Right cardiac atrium (tissue), 5 donors: ENCODE measurements at regions of chr1 and their contacts with region 1.

Region 1: DNA sequence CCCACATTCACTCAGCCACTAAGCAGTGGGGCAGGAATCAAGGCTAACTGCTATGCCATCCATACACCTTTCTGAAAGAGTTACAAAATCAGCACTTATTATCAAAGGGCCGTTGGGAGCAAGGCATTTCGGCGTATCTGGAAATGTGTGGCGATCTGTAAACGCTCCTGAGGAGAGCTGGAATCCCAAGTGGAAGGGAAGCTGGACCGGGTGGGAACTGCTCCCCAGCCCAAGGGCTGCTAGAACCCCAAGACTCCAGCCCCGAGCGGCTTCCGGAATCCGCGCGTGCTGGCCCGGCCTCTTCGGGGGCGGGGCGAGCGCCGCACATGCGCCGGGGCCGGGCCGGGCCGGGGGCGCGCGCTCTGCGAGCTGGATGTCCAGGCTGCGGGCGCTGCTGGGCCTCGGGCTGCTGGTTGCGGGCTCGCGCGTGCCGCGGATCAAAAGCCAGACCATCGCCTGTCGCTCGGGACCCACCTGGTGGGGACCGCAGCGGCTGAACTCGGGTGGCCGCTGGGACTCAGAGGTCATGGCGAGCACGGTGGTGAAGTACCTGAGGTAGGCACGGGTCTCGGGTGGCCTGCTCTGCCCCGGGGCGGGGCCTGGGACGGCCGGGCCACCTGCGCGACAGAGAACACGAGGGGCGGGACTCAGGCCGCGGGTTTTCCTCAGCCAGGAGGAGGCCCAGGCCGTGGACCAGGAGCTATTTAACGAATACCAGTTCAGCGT is at the start of gene NAXE:
- DNase-seq: peak; percentile 75 to 90 (median 90)
- ATAC-seq: peak; percentile 95 to 96
- H3K4me3 ChIP-seq: peak within 1 kb of the TSS; percentile 74
- H3K27ac ChIP-seq: peak within 1 kb of the TSS; percentile 85
- H3K4me1 ChIP-seq: peaks cover 2% of the 10 kb centered on the region
- H3K27me3 ChIP-seq: no peaks in the 10 kb centered on the region
- total RNA-seq, gene NAXE: 95.0 to 111 (median 98.9) TPM

Region 2: DNA sequence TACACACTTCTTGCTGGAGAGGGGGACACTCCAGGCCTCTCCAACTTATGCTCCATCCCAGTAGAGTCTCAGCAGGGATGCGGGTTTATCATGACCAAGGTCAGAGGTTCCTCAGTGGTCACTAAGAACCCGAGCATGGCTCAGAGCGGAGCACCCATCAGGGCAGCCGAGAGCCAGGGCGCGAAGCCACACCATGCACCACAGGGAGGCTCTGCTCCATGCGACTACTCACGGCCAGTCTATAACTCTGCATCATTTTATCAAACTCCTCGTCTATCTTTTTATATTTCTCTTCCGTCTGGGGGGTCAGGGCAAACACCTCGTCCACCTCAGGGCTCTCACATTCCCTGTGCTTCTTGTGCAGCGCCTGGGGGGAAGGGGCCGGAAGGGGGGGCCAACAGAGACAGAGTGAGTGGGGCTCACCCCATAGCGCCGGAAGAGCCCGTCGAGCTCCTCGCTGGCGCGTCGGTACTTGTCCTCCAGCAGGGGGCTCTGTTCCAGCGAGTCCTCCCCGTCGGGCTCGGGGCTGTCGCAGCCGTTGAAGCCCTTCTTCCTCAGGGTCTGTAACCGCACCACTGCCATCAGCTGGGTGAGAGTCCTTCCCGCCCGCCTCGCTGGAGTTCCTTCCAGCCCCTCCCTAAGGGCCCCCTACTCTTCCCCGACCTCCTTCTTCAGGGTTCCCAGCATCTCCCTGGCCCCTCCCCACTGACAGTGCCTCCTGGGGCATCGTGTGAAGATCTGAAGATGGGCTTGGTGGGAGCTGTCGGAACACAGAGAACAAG is 111.0 kb before region 1 on chr1:
- intact Hi-C with region 1: loop called in 2 of 4 experiments (anchors 10 kb)
- DNase-seq: peak; percentile 66 to 88 (median 83)
- ATAC-seq: peak; percentile 17 to 25
- H3K4me3 ChIP-seq: no peak overlapping the region
- H3K27ac ChIP-seq: peak overlapping the region; percentile 25
- H3K4me1 ChIP-seq: peaks cover 23% of the 10 kb centered on the region
- H3K27me3 ChIP-seq: no peaks in the 10 kb centered on the region